RWPE1 (cell line): ENCODE measurements at regions of chr1 and their contacts with region 1.

Region 1: GRCh38 chr1:161098210-161099068 is at the start of gene KLHDC9:
- DNase-seq: peak; percentile 82
- H3K27ac ChIP-seq: peak within 1 kb of the TSS; percentile 80
- CTCF ChIP-seq: no peak

Region 2: DNA sequence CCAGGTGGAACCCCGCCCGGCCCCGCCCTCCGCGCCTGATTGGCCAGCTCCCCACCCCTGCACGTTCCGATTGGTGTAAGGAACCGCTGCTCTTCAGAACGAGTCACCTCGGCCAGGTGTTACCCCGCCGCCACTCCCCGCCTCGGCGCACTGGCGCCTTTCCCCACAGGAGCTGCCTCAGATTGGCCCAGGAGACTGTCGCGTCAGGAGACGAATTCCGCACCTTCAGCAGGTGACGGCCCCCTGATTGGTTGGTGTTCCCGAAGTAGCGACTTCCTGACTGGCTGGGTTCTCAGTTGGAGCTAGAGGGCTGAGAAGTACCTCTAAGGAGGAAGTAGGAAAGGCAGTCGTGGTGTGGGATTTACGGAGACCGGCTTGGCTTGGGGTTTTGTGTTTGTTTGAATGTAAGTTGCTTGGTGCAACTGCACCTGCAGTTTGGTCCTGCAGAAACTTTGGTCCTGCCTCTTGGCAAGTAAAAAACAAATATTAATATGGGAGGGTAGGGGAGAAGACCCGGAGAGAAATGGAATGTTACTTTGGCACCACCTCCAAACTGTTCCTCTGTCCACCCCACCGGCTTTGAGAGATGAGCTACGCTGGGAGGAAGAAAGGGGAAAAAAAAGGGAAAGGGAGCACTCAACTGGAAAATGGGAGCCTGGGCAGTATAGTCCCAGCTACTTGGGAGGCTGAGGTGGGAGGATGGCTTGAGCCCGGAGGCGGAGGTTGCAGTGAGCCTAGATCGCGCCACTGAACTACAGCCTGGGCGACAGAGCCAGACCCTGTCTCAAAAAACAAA is 77.1 kb before region 1 on chr1:
- CTCF ChIA-PET with region 1: interaction called, 10 read pairs
- POLR2A ChIA-PET with region 1: no interaction called
- DNase-seq: peak; percentile 99
- H3K27ac ChIP-seq: peak overlapping the region; percentile 94
- CTCF ChIP-seq: no peak

Region 3: GRCh38 chr1:161045750-161046571 is 52.5 kb before region 1 on chr1 and contains the start of gene USF1:
- CTCF ChIA-PET with region 1: interaction called, 12 read pairs
- POLR2A ChIA-PET with region 1: no interaction called
- DNase-seq: peak; percentile 93
- H3K27ac ChIP-seq: peak within 1 kb of the TSS; percentile 91
- CTCF ChIP-seq: no peak

Region 4: DNA sequence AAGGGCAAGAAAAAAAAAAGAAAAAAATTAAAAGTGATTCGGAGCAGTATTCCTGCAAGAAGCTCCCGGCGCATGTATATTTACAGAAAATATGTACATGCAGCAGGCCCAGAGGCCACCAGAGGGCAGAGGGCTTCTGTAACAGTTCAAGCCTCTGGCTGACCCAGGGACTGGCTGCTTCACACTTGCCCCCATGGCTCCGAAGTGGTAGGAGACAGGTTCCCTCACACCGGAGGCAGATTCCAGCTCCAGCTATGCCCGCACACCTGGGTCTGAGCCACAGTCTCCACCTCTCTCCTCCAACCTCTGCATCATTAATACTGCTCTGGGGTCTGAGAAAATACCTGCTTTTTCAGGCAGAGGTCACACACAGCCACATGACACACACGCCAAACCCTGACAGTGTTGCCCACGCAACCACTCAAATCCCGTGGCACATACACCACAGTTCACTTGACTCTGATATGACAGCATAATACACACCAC is 26.5 kb before region 1 on chr1:
- CTCF ChIA-PET with region 1: interaction called, 75 read pairs
- POLR2A ChIA-PET with region 1: no interaction called
- DNase-seq: peak; percentile 64
- H3K27ac ChIP-seq: peak overlapping the region; percentile 77; the same call in 1 of the 2 replicates
- CTCF ChIP-seq: peak; percentile 51

Region 5: GRCh38 chr1:161083743-161084571 is 14.5 kb before region 1 on chr1:
- CTCF ChIA-PET with region 1: interaction called, 11 read pairs
- POLR2A ChIA-PET with region 1: no interaction called
- DNase-seq: no peak
- H3K27ac ChIP-seq: peak overlapping the region; percentile 80
- CTCF ChIP-seq: no peak